Aorta (tissue), 5 donors: ENCODE measurements at regions of chrX and their contacts with region 1.

Region 1: GRCh38 chrX:20252381-20253231 is 14.1 kb downstream of the RPS6KA3 start:
- DNase-seq: peak in 1 of 2 donors; percentile 64
- ATAC-seq: peak; percentile 60
- H3K4me3 ChIP-seq: no peak overlapping the region
- H3K27ac ChIP-seq: no peak overlapping the region
- H3K4me1 ChIP-seq: no peaks in the 10 kb centered on the region
- H3K27me3 ChIP-seq: no peaks in the 10 kb centered on the region

Region 2: GRCh38 chrX:20442597-20442996 is 190.0 kb after region 1 on chrX:
- intact Hi-C with region 1: loop called in 1 of 2 experiments (anchors 10 kb)
- DNase-seq: peak; percentile 88 to 91
- ATAC-seq: no peak
- H3K4me3 ChIP-seq: no peak overlapping the region
- H3K27ac ChIP-seq: no peak overlapping the region
- H3K4me1 ChIP-seq: no peaks in the 10 kb centered on the region
- H3K27me3 ChIP-seq: no peaks in the 10 kb centered on the region